ENCODE measurements at regions of chr11 and their contacts with region 1.

Region 1: DNA sequence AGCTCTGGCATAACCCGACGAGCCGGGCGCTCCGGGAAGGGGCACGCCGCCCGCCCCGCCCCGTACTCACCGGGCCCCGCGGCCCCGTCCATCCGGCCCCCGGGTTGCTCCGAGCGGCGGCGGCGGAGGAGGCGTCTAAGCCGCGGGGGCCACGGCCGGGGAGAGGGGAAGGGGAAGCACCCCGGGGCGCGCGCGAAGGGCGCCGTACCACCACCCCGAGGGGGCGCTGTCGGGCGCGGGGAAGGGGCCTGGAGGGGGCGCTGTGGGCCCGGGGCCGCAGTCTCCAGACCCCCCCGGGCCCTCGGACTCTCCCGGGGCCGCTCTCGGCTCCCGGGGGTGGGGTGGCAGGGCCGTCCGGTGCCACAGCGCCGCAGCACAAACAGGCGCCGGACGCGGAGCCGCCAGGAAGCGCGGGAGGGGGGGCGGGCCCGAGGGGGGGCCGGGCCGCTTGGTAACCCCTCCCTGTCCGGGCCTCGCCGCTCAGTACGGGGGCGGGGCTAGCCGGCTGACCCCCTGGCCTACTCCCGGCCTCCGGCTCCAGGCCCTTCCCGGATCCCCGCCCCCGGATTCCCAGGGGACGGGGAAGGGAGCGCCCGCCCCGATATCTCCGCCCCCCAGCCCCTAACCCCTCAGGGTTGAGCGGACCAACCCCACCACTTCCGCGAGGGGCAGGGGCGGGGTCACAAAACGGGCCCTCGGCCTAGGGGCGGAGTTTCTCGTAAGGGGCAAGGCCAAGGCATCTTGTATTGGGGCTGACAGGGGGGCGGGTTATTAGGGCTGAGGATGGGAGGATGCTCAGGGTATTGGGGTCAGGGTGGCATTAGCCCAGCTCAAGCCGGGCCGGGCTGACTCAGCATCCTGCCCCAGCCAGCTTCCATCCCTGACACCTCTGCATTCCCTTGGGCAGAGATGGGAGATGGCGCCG is at the starts of genes EML3 and ROM1:
- DNase-seq: peak; percentile 89
- H3K4me3 Mint-ChIP-seq: peak within 1 kb of the TSS; percentile 90
- H3K27ac Mint-ChIP-seq: peak within 1 kb of the TSS; percentile 80
- H3K4me1 Mint-ChIP-seq: peaks cover 15% of the 10 kb centered on the region
- H3K27me3 Mint-ChIP-seq: no peaks in the 10 kb centered on the region
- CTCF ChIP-seq: peak; percentile 100
- total RNA-seq, gene EML3: 33.9 and 43.7 TPM in 2 replicates
- total RNA-seq, gene ROM1: 2.5 and 2.9 TPM in 2 replicates

Region 2: GRCh38 chr11:62573592-62574362 is 38.9 kb before region 1 on chr11 and contains the start of gene EEF1G:
- CTCF ChIA-PET with region 1: interaction called, 5 read pairs
- POLR2A ChIA-PET with region 1: interaction called, 8 read pairs
- intact Hi-C with region 1: loop called (anchors 5 kb)
- DNase-seq: peak; percentile 100
- H3K4me3 Mint-ChIP-seq: peak within 1 kb of the TSS; percentile 100
- H3K27ac Mint-ChIP-seq: peak within 1 kb of the TSS; percentile 100
- H3K4me1 Mint-ChIP-seq: peaks cover 30% of the 10 kb centered on the region
- H3K27me3 Mint-ChIP-seq: no peaks in the 10 kb centered on the region
- CTCF ChIP-seq: no peak
- total RNA-seq, gene EEF1G: 1,510 and 1,855 TPM in 2 replicates

Region 3: GRCh38 chr11:62601394-62602140 is 11.1 kb before region 1 on chr11 and contains the start of gene MTA2:
- CTCF ChIA-PET with region 1: interaction called, 7 read pairs
- POLR2A ChIA-PET with region 1: interaction called, 108 read pairs
- intact Hi-C with region 1: no loop called
- DNase-seq: peak; percentile 98
- H3K4me3 Mint-ChIP-seq: peak within 1 kb of the TSS; percentile 86
- H3K27ac Mint-ChIP-seq: peak within 1 kb of the TSS; percentile 96
- H3K4me1 Mint-ChIP-seq: peaks cover 38% of the 10 kb centered on the region
- H3K27me3 Mint-ChIP-seq: no peaks in the 10 kb centered on the region
- CTCF ChIP-seq: no peak
- total RNA-seq, gene MTA2: 139 and 176 TPM in 2 replicates

Region 4: GRCh38 chr11:62645956-62646824 is 33.6 kb after region 1 on chr11 and contains the start of gene GANAB:
- CTCF ChIA-PET with region 1: interaction called, 3 read pairs
- POLR2A ChIA-PET with region 1: interaction called, 3 read pairs
- intact Hi-C with region 1: loop called (anchors 5 kb)
- DNase-seq: peak; percentile 99
- H3K4me3 Mint-ChIP-seq: peak within 1 kb of the TSS; percentile 95
- H3K27ac Mint-ChIP-seq: peak within 1 kb of the TSS; percentile 92
- H3K4me1 Mint-ChIP-seq: no peaks in the 10 kb centered on the region
- H3K27me3 Mint-ChIP-seq: no peaks in the 10 kb centered on the region
- CTCF ChIP-seq: no peak
- total RNA-seq, gene GANAB: 364 and 374 TPM in 2 replicates

Region 5: GRCh38 chr11:62694455-62695167 is 82.0 kb after region 1 on chr11:
- CTCF ChIA-PET with region 1: no interaction called
- POLR2A ChIA-PET with region 1: no interaction called
- intact Hi-C with region 1: loop called (anchors 2 kb)
- DNase-seq: peak; percentile 86
- H3K4me3 Mint-ChIP-seq: no peak overlapping the region
- H3K27ac Mint-ChIP-seq: no peak overlapping the region
- H3K4me1 Mint-ChIP-seq: peaks cover 6% of the 10 kb centered on the region
- H3K27me3 Mint-ChIP-seq: no peaks in the 10 kb centered on the region
- CTCF ChIP-seq: peak; percentile 80